CD8-positive, alpha-beta T cell (primary cell): ENCODE measurements at regions of chr5 and their contacts with region 1.

Region 1: GRCh38 chr5:139422307-139422893 is 16.9 kb downstream of the DNAJC18 start:
- DNase-seq: peak in 8 of 9 experiments; percentile 15 to 86 (median 52)
- ATAC-seq: peak; percentile 99
- H3K4me3 ChIP-seq: no peak overlapping the region
- H3K4me3 Mint-ChIP-seq: no peak overlapping the region
- H3K27ac ChIP-seq: no peak overlapping the region
- H3K27ac Mint-ChIP-seq: no peak overlapping the region
- H3K4me1 ChIP-seq: no peaks in the 10 kb centered on the region
- H3K4me1 Mint-ChIP-seq: peaks cover 5% of the 10 kb centered on the region
- H3K27me3 ChIP-seq: no peaks in the 10 kb centered on the region
- H3K27me3 Mint-ChIP-seq: no peaks in the 10 kb centered on the region
- CTCF ChIP-seq: peak; percentile 89

Region 2: GRCh38 chr5:139104577-139105276 is 317.7 kb before region 1 on chr5:
- CTCF ChIA-PET with region 1: no interaction called
- POLR2A ChIA-PET with region 1: no interaction called
- intact Hi-C with region 1: no loop called
- DNase-seq: no peak
- ATAC-seq: no peak
- H3K4me3 ChIP-seq: no peak overlapping the region
- H3K4me3 Mint-ChIP-seq: no peak overlapping the region
- H3K27ac ChIP-seq: no peak overlapping the region
- H3K27ac Mint-ChIP-seq: no peak overlapping the region
- H3K4me1 ChIP-seq: no peaks in the 10 kb centered on the region
- H3K4me1 Mint-ChIP-seq: no peaks in the 10 kb centered on the region
- H3K27me3 ChIP-seq: no peaks in the 10 kb centered on the region
- H3K27me3 Mint-ChIP-seq: no peaks in the 10 kb centered on the region
- CTCF ChIP-seq: no peak

Region 3: GRCh38 chr5:139439013-139439903 is 16.9 kb after region 1 on chr5 and contains the start of gene DNAJC18:
- CTCF ChIA-PET with region 1: interaction called, 64 read pairs
- POLR2A ChIA-PET with region 1: interaction called, 5 read pairs
- intact Hi-C with region 1: loop called in 1 of 2 experiments (anchors 2 kb)
- DNase-seq: peak; percentile 78 to 93 (median 90)
- ATAC-seq: peak; percentile 88
- H3K4me3 ChIP-seq: peak within 1 kb of the TSS; percentile 95 to 98
- H3K4me3 Mint-ChIP-seq: peak within 1 kb of the TSS; percentile 98
- H3K27ac ChIP-seq: peak within 1 kb of the TSS; percentile 97 to 98
- H3K27ac Mint-ChIP-seq: peak within 1 kb of the TSS; percentile 99
- H3K4me1 ChIP-seq: peaks cover 24% of the 10 kb centered on the region
- H3K4me1 Mint-ChIP-seq: peaks cover 33% of the 10 kb centered on the region
- H3K27me3 ChIP-seq: no peaks in the 10 kb centered on the region
- H3K27me3 Mint-ChIP-seq: no peaks in the 10 kb centered on the region
- CTCF ChIP-seq: no peak
- total RNA-seq, gene DNAJC18: 8.0 to 10.2 TPM

Region 4: DNA sequence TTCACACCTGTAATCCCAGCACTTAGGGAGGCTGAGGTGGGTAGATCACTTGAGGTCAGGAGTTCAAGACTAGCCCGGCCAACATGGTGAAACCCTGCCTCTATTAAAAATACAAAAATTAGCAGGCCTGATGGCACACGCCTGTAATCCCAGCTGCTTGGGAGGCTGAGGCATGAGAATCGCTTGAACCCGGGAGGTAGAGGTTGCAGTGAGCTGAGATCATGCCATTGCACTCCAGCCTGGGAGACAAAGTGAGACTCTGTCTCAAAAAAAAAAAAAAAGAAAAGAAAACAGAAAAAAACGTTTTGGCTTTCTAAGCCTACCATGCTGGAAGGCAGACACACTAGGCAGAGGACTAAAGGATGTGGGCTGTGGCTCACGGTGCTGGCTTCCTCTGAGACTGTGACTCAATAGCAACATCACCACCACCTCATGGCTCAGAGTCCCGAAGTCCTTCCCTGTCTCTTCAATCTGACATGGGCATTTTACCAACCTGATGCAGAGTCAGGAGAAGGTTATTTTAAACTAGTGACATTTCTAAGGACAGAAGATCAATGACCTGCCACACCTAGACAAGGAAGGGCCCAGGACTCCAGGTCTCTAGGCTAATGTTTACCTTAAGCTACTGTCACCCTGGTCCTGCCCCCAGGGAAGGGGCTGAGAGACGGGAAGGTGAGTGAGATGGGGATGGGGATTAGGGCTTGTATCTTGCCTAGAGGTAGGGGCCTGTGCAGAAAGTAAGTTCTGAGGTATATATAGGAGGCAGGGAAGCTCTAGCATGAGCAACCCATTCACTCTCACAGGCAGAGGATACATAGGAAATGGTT is 36.4 kb after region 1 on chr5:
- CTCF ChIA-PET with region 1: interaction called, 14 read pairs
- POLR2A ChIA-PET with region 1: no interaction called
- intact Hi-C with region 1: loop called in 1 of 2 experiments (anchors 2 kb)
- DNase-seq: peak; percentile 58 to 95 (median 77)
- ATAC-seq: peak; percentile 98
- H3K4me3 ChIP-seq: no peak overlapping the region
- H3K4me3 Mint-ChIP-seq: peak overlapping the region; percentile 57
- H3K27ac ChIP-seq: peak overlapping the region in 1 of 2 experiments; percentile 33
- H3K27ac Mint-ChIP-seq: peak overlapping the region; percentile 94
- H3K4me1 ChIP-seq: peaks cover 52% of the 10 kb centered on the region
- H3K4me1 Mint-ChIP-seq: peaks cover 61% of the 10 kb centered on the region
- H3K27me3 ChIP-seq: no peaks in the 10 kb centered on the region
- H3K27me3 Mint-ChIP-seq: no peaks in the 10 kb centered on the region
- CTCF ChIP-seq: no peak

Region 5: GRCh38 chr5:139482050-139482889 is 59.9 kb after region 1 on chr5 and contains the start of gene STING1:
- CTCF ChIA-PET with region 1: interaction called, 27 read pairs
- POLR2A ChIA-PET with region 1: interaction called, 13 read pairs
- intact Hi-C with region 1: loop called in 1 of 2 experiments (anchors 1 kb)
- DNase-seq: peak; percentile 22 to 89 (median 73)
- ATAC-seq: peak; percentile 78
- H3K4me3 ChIP-seq: peak within 1 kb of the TSS; percentile 56 to 61
- H3K4me3 Mint-ChIP-seq: peak within 1 kb of the TSS; percentile 90
- H3K27ac ChIP-seq: peak within 1 kb of the TSS; percentile 58 to 84
- H3K27ac Mint-ChIP-seq: peak within 1 kb of the TSS; percentile 97
- H3K4me1 ChIP-seq: peaks cover 26% of the 10 kb centered on the region
- H3K4me1 Mint-ChIP-seq: peaks cover 34% of the 10 kb centered on the region
- H3K27me3 ChIP-seq: no peaks in the 10 kb centered on the region
- H3K27me3 Mint-ChIP-seq: no peaks in the 10 kb centered on the region
- CTCF ChIP-seq: no peak
- total RNA-seq, gene STING1: 55.0 to 57.8 TPM

Region 6: DNA sequence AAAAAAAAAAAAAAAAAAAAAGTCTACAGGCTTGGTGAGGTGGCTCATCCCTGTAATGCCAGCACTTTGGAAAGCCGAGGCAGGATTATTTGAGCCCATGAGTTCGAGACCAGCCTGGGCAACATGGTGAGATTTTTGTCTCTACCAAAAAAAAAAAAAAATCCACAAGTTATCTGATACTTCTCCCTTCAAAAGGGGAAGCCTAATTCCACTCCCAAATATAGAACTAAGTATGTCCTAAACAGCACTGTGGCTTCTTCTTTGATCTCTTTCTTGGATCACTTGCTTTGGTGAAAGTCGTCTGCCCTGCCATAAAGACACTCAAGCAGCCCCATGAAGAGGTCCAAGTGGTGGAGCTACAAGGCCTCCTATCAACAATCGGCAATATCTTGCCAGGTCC is 79.0 kb after region 1 on chr5:
- CTCF ChIA-PET with region 1: interaction called, 17 read pairs
- POLR2A ChIA-PET with region 1: interaction called, 3 read pairs
- intact Hi-C with region 1: no loop called
- DNase-seq: no peak
- ATAC-seq: no peak
- H3K4me3 ChIP-seq: no peak overlapping the region
- H3K4me3 Mint-ChIP-seq: no peak overlapping the region
- H3K27ac ChIP-seq: no peak overlapping the region
- H3K27ac Mint-ChIP-seq: no peak overlapping the region
- H3K4me1 ChIP-seq: no peaks in the 10 kb centered on the region
- H3K4me1 Mint-ChIP-seq: no peaks in the 10 kb centered on the region
- H3K27me3 ChIP-seq: no peaks in the 10 kb centered on the region
- H3K27me3 Mint-ChIP-seq: peaks cover 4% of the 10 kb centered on the region
- CTCF ChIP-seq: no peak

Region 7: DNA sequence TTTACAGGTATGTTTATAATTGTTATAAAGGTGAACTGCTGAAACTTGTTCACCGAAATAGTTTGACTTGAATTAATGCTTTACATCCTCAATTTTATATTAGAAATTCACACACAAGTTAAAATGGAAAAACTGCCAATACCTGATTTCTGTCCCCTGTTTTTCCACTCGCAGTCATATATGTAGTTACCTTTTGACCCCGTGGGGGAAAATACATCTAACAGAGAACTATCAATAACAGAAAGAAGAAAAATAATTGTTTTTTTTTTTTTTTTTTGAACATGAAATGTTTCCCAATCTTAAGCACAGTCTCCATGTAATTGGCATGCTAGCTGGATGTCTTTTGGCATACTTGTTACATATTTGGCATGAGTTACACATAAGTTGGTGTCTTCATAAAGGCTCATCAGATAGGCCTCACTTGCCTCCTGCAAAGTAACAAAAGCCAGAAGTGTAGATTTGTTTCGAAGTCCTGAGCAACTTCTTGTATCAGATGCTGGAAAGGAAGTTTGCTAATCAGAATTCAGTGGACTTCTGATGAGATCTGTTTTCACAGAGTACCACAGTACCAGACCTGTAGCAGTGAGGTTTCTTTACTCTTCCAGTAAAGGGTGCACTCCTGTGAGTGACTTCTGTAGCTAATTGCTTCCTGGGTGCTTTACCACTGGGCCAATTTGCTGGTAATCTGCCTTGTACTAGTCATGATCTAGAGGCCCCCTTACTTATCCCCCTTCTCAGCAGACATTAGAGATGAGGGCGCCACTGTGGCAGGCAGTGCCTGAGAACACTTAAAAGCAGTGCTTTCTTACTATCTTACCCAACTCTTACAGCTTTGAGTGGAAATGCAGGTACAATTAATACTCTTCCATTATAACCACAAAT is 189.5 kb after region 1 on chr5:
- CTCF ChIA-PET with region 1: no interaction called
- POLR2A ChIA-PET with region 1: no interaction called
- intact Hi-C with region 1: loop called in 1 of 2 experiments (anchors 5 kb)
- DNase-seq: peak in 1 of 9 experiments; percentile 11
- ATAC-seq: peak; percentile 54
- H3K4me3 ChIP-seq: no peak overlapping the region
- H3K4me3 Mint-ChIP-seq: no peak overlapping the region
- H3K27ac ChIP-seq: peak overlapping the region in 1 of 2 experiments; percentile 30
- H3K27ac Mint-ChIP-seq: peak overlapping the region; percentile 76
- H3K4me1 ChIP-seq: peaks cover 5% of the 10 kb centered on the region
- H3K4me1 Mint-ChIP-seq: peaks cover 42% of the 10 kb centered on the region
- H3K27me3 ChIP-seq: no peaks in the 10 kb centered on the region
- H3K27me3 Mint-ChIP-seq: no peaks in the 10 kb centered on the region
- CTCF ChIP-seq: no peak

Region 8: DNA sequence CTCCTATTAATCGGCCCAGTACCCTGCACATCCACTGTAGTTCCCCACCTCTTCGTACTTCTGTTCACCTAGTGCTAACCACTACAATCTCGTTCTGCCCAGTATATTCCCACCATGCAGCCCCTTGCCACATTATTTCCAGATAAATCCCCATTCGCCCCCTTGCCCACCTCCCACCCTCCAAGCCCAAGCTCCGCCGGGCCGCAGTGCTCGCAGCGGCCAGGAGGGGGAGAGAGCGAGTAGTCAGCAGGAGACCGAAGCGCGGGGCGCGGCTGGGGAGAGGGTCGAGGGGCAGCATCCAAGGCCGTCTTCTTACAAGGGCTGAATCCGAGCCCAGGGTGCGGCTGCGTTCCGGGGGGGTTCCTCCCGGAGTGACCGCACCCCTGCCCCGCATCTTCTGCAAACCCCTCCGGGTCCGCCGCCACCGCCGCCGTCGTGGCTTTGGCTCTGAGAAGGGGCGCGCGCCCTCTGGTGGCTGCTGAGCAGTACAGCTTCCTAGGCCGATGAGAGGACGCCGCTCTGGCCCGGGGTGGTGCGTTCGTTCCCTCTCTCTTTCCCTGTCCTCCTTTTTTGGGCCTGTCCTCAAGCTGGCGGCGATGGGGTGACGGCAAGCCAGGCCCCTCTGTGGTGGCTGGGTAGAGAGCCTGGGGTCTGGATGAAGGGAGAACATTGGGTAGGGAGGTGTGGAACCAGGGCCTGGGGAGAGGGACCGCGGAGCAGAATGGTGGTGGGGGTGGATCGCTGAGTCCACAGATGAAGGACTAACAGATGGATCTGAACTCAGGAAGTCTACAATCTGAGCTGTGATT is 343.2 kb after region 1 on chr5:
- CTCF ChIA-PET with region 1: interaction called, 6 read pairs
- POLR2A ChIA-PET with region 1: no interaction called
- intact Hi-C with region 1: loop called (anchors 1 to 2 kb)
- DNase-seq: peak; percentile 74 to 93 (median 83)
- ATAC-seq: peak; percentile 92
- H3K4me3 ChIP-seq: peak overlapping the region; percentile 60 to 67
- H3K4me3 Mint-ChIP-seq: peak overlapping the region; percentile 67
- H3K27ac ChIP-seq: no peak overlapping the region
- H3K27ac Mint-ChIP-seq: no peak overlapping the region
- H3K4me1 ChIP-seq: peaks cover 20% of the 10 kb centered on the region
- H3K4me1 Mint-ChIP-seq: peaks cover 16% of the 10 kb centered on the region
- H3K27me3 ChIP-seq: peaks cover 5 to 9% of the 10 kb centered on the region in 2 experiments
- H3K27me3 Mint-ChIP-seq: peaks cover 24% of the 10 kb centered on the region
- CTCF ChIP-seq: peak; percentile 100